CD8-positive, alpha-beta T cell (primary cell): ENCODE measurements at regions of chr1 and their contacts with region 1.

Region 1: DNA sequence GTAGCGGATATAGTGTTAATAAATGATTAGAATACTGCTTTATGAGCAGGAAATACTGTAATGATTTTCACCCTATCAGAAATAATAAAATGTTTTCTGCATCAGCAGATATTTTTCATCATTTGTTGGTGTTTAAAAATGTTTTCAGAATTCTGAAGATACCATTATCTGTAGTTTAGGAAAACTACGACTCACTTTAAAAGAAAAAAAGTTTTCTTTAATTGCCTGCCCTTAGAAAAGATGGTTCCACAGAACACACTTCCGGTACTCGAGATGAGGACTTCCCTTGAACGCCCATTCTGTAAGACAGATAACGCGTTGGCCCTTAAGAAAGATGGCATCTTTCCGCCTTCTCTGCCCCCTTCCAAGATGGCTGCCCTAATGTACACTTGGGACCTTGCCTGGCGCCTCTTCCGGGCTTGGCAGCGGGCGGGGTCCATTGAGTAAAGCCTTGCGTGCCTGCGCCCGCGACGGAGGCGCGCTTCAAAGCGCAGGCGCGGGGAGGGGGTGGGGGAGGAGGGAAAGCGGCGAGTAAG is at the start of gene SZRD1:
- DNase-seq: peak; percentile 89 to 100 (median 95)
- ATAC-seq: peak; percentile 86
- H3K4me3 ChIP-seq: peak within 1 kb of the TSS; percentile 99
- H3K4me3 Mint-ChIP-seq: peak within 1 kb of the TSS; percentile 99
- H3K27ac ChIP-seq: peak within 1 kb of the TSS; percentile 96 to 100
- H3K27ac Mint-ChIP-seq: peak within 1 kb of the TSS; percentile 99
- H3K4me1 ChIP-seq: peaks cover 31% of the 10 kb centered on the region
- H3K4me1 Mint-ChIP-seq: peaks cover 37% of the 10 kb centered on the region
- H3K27me3 ChIP-seq: no peaks in the 10 kb centered on the region
- H3K27me3 Mint-ChIP-seq: no peaks in the 10 kb centered on the region
- CTCF ChIP-seq: no peak
- total RNA-seq, gene SZRD1: 133 to 136 TPM

Region 2: GRCh38 chr1:15835741-15836510 is 530.9 kb before region 1 on chr1:
- CTCF ChIA-PET with region 1: no interaction called
- POLR2A ChIA-PET with region 1: no interaction called
- intact Hi-C with region 1: loop called in 1 of 2 experiments (anchors 2 kb)
- DNase-seq: peak; percentile 96 to 100 (median 99)
- ATAC-seq: peak; percentile 62
- H3K4me3 ChIP-seq: peak overlapping the region; percentile 83 to 84
- H3K4me3 Mint-ChIP-seq: peak overlapping the region; percentile 96
- H3K27ac ChIP-seq: peak overlapping the region; percentile 83 to 99
- H3K27ac Mint-ChIP-seq: peak overlapping the region; percentile 99
- H3K4me1 ChIP-seq: peaks cover 20% of the 10 kb centered on the region
- H3K4me1 Mint-ChIP-seq: peaks cover 23% of the 10 kb centered on the region
- H3K27me3 ChIP-seq: no peaks in the 10 kb centered on the region
- H3K27me3 Mint-ChIP-seq: no peaks in the 10 kb centered on the region
- CTCF ChIP-seq: no peak

Region 3: GRCh38 chr1:16078925-16079656 is 287.7 kb before region 1 on chr1:
- CTCF ChIA-PET with region 1: interaction called, 19 read pairs
- POLR2A ChIA-PET with region 1: interaction called, 5 read pairs
- intact Hi-C with region 1: loop called (anchors 1 to 10 kb)
- DNase-seq: peak; percentile 54 to 87 (median 76)
- ATAC-seq: peak; percentile 83
- H3K4me3 ChIP-seq: peak overlapping the region; percentile 41 to 53
- H3K4me3 Mint-ChIP-seq: peak overlapping the region; percentile 81
- H3K27ac ChIP-seq: peak overlapping the region in 1 of 2 experiments; percentile 28
- H3K27ac Mint-ChIP-seq: peak overlapping the region; percentile 32
- H3K4me1 ChIP-seq: peaks cover 6% of the 10 kb centered on the region
- H3K4me1 Mint-ChIP-seq: peaks cover 11% of the 10 kb centered on the region
- H3K27me3 ChIP-seq: peaks cover 0 to under 1% of the 10 kb centered on the region in 2 experiments
- H3K27me3 Mint-ChIP-seq: peaks cover 9% of the 10 kb centered on the region
- CTCF ChIP-seq: peak; percentile 82

Region 4: GRCh38 chr1:16351994-16352841 is 14.6 kb before region 1 on chr1 and contains the start of gene FBXO42:
- CTCF ChIA-PET with region 1: interaction called, 67 read pairs
- POLR2A ChIA-PET with region 1: interaction called, 20 read pairs
- intact Hi-C with region 1: loop called (anchors 1 kb)
- DNase-seq: peak; percentile 82 to 97 (median 91)
- ATAC-seq: peak; percentile 90
- H3K4me3 ChIP-seq: peak within 1 kb of the TSS; percentile 59 to 89
- H3K4me3 Mint-ChIP-seq: peak within 1 kb of the TSS; percentile 92
- H3K27ac ChIP-seq: peak within 1 kb of the TSS; percentile 74 to 96
- H3K27ac Mint-ChIP-seq: peak within 1 kb of the TSS; percentile 93
- H3K4me1 ChIP-seq: peaks cover 22% of the 10 kb centered on the region
- H3K4me1 Mint-ChIP-seq: peaks cover 33% of the 10 kb centered on the region
- H3K27me3 ChIP-seq: no peaks in the 10 kb centered on the region
- H3K27me3 Mint-ChIP-seq: no peaks in the 10 kb centered on the region
- CTCF ChIP-seq: peak; percentile 37
- total RNA-seq, gene FBXO42: 18.0 to 18.2 TPM

Region 5: GRCh38 chr1:16402742-16403141 is 36.0 kb after region 1 on chr1:
- CTCF ChIA-PET with region 1: no interaction called
- POLR2A ChIA-PET with region 1: no interaction called
- intact Hi-C with region 1: no loop called
- DNase-seq: no peak
- ATAC-seq: no peak
- H3K4me3 ChIP-seq: no peak overlapping the region
- H3K4me3 Mint-ChIP-seq: no peak overlapping the region
- H3K27ac ChIP-seq: no peak overlapping the region
- H3K27ac Mint-ChIP-seq: no peak overlapping the region
- H3K4me1 ChIP-seq: no peaks in the 10 kb centered on the region
- H3K4me1 Mint-ChIP-seq: no peaks in the 10 kb centered on the region
- H3K27me3 ChIP-seq: no peaks in the 10 kb centered on the region
- H3K27me3 Mint-ChIP-seq: no peaks in the 10 kb centered on the region
- CTCF ChIP-seq: no peak

Region 6: DNA sequence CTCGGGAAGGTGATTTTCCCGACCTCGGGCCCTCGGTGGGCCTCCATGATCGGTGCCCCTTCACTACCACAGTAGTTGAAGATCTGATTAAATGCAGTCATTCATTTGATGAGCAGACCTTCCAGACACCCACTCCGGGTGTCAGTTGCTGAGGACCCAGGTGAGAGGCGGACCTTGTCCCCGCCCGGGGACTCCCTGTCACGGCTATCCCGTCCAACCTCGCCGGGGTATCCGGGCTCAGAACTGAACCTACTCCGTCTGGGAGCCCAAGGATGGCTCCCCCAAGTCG is 277.3 kb after region 1 on chr1:
- CTCF ChIA-PET with region 1: no interaction called
- POLR2A ChIA-PET with region 1: no interaction called
- intact Hi-C with region 1: loop called in 1 of 2 experiments (anchors 1 kb)
- DNase-seq: no peak
- ATAC-seq: peak; percentile 38
- H3K4me3 ChIP-seq: peak overlapping the region; percentile 71 to 90
- H3K4me3 Mint-ChIP-seq: no peak overlapping the region
- H3K27ac ChIP-seq: peak overlapping the region; percentile 77 to 86
- H3K27ac Mint-ChIP-seq: no peak overlapping the region
- H3K4me1 ChIP-seq: peaks cover 38% of the 10 kb centered on the region
- H3K4me1 Mint-ChIP-seq: peaks cover 8% of the 10 kb centered on the region
- H3K27me3 ChIP-seq: no peaks in the 10 kb centered on the region
- H3K27me3 Mint-ChIP-seq: no peaks in the 10 kb centered on the region
- CTCF ChIP-seq: no peak

Region 7: GRCh38 chr1:16960560-16961296 is 593.9 kb after region 1 on chr1:
- CTCF ChIA-PET with region 1: no interaction called
- POLR2A ChIA-PET with region 1: no interaction called
- intact Hi-C with region 1: no loop called
- DNase-seq: peak; percentile 37 to 83 (median 76)
- ATAC-seq: peak; percentile 87
- H3K4me3 ChIP-seq: peak overlapping the region; percentile 39 to 41
- H3K4me3 Mint-ChIP-seq: peak overlapping the region; percentile 80
- H3K27ac ChIP-seq: no peak overlapping the region
- H3K27ac Mint-ChIP-seq: no peak overlapping the region
- H3K4me1 ChIP-seq: no peaks in the 10 kb centered on the region
- H3K4me1 Mint-ChIP-seq: peaks cover 10% of the 10 kb centered on the region
- H3K27me3 ChIP-seq: no peaks in the 10 kb centered on the region
- H3K27me3 Mint-ChIP-seq: no peaks in the 10 kb centered on the region
- CTCF ChIP-seq: peak; percentile 73